ENCODE measurements at regions of chr1 and their contacts with region 1.

Region 1: DNA sequence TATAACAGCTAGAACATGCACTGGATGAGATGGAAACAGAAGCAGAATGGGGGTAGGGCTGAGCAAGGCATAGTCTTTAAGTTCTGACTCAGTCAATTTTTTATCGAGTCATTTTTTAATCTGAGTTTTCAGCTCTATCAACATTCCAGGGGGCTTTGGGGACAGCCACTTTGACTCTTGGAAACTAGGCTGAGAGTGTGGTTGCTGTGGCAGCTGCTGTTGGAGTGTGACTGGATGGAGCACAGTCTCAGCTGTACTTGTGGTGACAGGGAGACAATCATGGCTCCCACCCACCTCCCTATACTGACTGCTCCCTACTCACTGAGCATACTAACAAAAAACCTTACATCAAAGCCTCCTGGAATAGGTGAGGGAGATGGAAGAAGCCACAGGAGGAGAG is 25.0 kb downstream of the GJA5 start:
- DNase-seq: no peak
- H3K4me3 ChIP-seq: no peak overlapping the region
- H3K27ac ChIP-seq: no peak overlapping the region
- H3K4me1 ChIP-seq: no peaks in the 10 kb centered on the region
- H3K27me3 ChIP-seq: no peaks in the 10 kb centered on the region
- CTCF ChIP-seq: no peak
- POLR2A ChIP-seq: no peak

Region 2: DNA sequence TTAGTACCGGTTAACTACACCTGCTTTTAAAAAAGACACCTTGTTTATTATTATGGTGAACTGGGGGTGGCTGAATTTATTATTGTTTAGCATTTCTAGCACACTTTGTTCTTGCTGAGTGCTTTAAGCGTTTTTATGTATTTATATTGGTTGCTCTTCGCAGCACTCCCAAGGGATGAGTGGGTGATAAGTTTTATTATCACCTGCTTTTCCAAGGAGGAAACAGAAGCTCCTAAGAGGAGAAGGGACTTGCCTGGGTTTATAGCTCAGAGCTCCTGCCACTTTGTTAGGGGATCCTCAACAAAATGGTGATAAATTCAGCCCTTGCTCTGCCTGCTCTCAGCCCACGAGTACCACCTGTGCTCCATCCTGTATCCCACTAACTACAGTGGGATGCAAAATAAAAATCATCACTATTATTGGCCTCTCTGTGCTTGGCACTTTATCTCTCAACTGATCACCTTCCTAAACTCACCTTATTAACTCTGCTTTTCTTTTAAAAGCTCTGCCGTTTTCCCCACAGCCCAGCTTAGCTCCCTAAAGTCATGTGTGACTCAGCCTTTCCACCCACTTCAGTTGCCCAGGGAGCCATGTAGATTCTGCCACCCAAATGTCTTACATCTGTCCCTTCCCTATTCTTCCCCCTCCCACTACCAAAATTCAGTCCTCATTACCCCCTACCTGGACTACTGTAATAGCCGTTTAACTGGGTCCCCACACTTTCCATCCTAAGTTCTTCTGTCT is 149.6 kb before region 1 on chr1:
- CTCF ChIA-PET with region 1: no interaction called
- POLR2A ChIA-PET with region 1: no interaction called
- dilution Hi-C with region 1: no loop called
- intact Hi-C with region 1: no loop called
- DNase-seq: no peak
- H3K4me3 ChIP-seq: no peak overlapping the region
- H3K27ac ChIP-seq: no peak overlapping the region
- H3K4me1 ChIP-seq: no peaks in the 10 kb centered on the region
- H3K27me3 ChIP-seq: no peaks in the 10 kb centered on the region
- CTCF ChIP-seq: no peak
- POLR2A ChIP-seq: no peak

Region 3: DNA sequence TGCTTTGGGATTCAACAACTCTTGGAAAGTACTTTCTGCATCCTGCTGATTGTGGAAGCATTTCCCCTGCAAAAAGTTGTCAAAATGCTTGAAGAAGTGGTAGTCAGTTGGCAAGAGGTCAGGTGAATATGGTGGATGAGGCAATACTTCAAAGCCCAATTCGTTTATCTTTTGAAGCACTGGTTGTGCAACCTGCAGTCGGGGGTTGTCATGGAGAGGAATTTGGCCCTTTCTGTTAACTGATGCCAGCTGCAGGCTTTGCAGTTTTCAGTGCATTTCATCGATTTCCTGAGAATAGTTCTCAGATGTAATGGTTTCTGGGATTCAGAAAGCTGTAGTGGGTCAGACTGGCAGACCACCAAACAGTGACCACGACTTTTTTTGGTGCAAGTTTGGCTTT is 72.6 kb after region 1 on chr1:
- CTCF ChIA-PET with region 1: no interaction called
- POLR2A ChIA-PET with region 1: no interaction called
- dilution Hi-C with region 1: no loop called
- intact Hi-C with region 1: loop called (anchors 5 kb)
- DNase-seq: peak; percentile 59
- H3K4me3 ChIP-seq: no peak overlapping the region
- H3K27ac ChIP-seq: no peak overlapping the region
- H3K4me1 ChIP-seq: peaks cover 11% of the 10 kb centered on the region
- H3K27me3 ChIP-seq: no peaks in the 10 kb centered on the region
- CTCF ChIP-seq: no peak
- POLR2A ChIP-seq: no peak